ENCODE measurements at regions of chr3 and their contacts with region 1.

Region 1: GRCh38 chr3:149603126-149604074 is 54.4 kb downstream of the WWTR1 start:
- DNase-seq: no peak
- H3K4me3 ChIP-seq: no peak overlapping the region
- H3K27ac ChIP-seq: peak overlapping the region; percentile 68
- H3K4me1 ChIP-seq: peaks cover 23% of the 10 kb centered on the region
- H3K27me3 ChIP-seq: no peaks in the 10 kb centered on the region
- CTCF ChIP-seq: no peak

Region 2: GRCh38 chr3:149339931-149340309 is 263.5 kb before region 1 on chr3:
- CTCF ChIA-PET with region 1: no interaction called
- dilution Hi-C with region 1: no loop called
- in situ Hi-C with region 1: no loop called
- intact Hi-C with region 1: no loop called
- DNase-seq: peak; percentile 88
- H3K4me3 ChIP-seq: peak overlapping the region in 1 of 3 experiments; percentile 6
- H3K27ac ChIP-seq: peak overlapping the region; percentile 77
- H3K4me1 ChIP-seq: peaks cover 43% of the 10 kb centered on the region
- H3K27me3 ChIP-seq: no peaks in the 10 kb centered on the region
- CTCF ChIP-seq: no peak

Region 3: DNA sequence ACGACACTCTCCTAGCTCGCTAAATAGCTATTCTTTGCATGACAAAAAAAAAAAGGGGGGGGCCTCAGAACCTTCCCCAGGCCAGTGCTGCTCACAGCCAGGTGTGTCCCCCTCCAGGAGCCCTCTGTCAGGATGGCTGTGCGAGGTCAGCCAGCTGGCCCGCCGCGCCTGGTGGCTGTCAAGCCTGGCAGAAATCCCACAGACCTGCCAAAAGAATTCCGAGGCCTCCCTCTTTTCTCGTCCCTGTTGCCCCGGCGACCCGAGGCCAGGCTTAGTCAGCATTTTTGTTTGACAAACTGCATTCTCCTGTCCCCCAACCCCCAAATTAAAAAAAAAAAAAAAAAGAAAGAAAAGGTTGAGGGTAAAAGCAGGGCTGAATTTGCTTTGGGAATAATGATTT is 67.0 kb before region 1 on chr3:
- CTCF ChIA-PET with region 1: no interaction called
- dilution Hi-C with region 1: no loop called
- in situ Hi-C with region 1: no loop called
- intact Hi-C with region 1: no loop called
- DNase-seq: no peak
- H3K4me3 ChIP-seq: no peak overlapping the region
- H3K27ac ChIP-seq: no peak overlapping the region
- H3K4me1 ChIP-seq: peaks cover 23% of the 10 kb centered on the region
- H3K27me3 ChIP-seq: no peaks in the 10 kb centered on the region
- CTCF ChIP-seq: no peak

Region 4: DNA sequence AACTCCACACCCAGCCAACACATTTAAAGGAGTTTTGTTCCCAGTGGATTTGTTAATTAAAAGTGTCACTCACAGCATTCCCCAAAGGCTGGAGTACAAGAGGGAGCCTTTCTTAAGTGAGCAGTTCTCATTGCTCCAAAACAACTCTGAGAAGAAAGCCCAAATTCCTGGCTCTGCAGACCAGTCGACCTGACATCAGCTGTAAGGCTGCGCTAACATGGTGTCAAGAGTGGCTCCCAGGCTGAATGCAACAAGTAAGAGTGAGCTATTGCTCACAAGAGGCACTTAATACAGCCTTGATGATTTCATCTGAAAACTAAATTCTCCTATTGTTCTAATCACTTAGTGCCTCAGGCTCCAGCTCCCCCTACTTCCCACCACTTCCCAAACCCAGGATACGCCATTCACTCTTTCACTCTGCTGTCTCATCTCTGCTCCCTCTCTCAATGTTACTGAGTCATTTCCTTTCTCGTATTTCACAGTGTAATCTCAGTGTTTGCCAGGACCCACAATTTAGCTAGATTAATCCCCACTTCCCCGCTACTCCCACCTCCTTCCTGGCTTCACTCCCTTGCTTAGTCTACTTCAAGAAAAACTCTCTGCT is 27.3 kb before region 1 on chr3:
- CTCF ChIA-PET with region 1: interaction called, 4 read pairs
- dilution Hi-C with region 1: no loop called
- in situ Hi-C with region 1: no loop called
- intact Hi-C with region 1: loop called (anchors 1 kb)
- DNase-seq: peak; percentile 99
- H3K4me3 ChIP-seq: no peak overlapping the region
- H3K27ac ChIP-seq: peak overlapping the region; percentile 97
- H3K4me1 ChIP-seq: peaks cover 89% of the 10 kb centered on the region
- H3K27me3 ChIP-seq: no peaks in the 10 kb centered on the region
- CTCF ChIP-seq: no peak

Region 5: GRCh38 chr3:149581681-149582370 is 21.6 kb before region 1 on chr3:
- CTCF ChIA-PET with region 1: interaction called, 4 read pairs
- dilution Hi-C with region 1: no loop called
- in situ Hi-C with region 1: no loop called
- intact Hi-C with region 1: loop called (anchors 2 kb)
- DNase-seq: peak; percentile 98
- H3K4me3 ChIP-seq: peak overlapping the region in 1 of 3 experiments; percentile 2
- H3K27ac ChIP-seq: peak overlapping the region; percentile 98
- H3K4me1 ChIP-seq: peaks cover 87% of the 10 kb centered on the region
- H3K27me3 ChIP-seq: no peaks in the 10 kb centered on the region
- CTCF ChIP-seq: no peak